ENCODE measurements at regions of chr2 and their contacts with region 1.

Region 1: GRCh38 chr2:149561309-149561926 is 26.2 kb downstream of the MMADHC start:
- DNase-seq: peak; percentile 35
- ATAC-seq: peak; percentile 35; the same call in 2 of the 3 replicates
- H3K4me3 ChIP-seq: no peak overlapping the region
- H3K27ac ChIP-seq: no peak overlapping the region
- H3K4me1 ChIP-seq: peaks cover 9% of the 10 kb centered on the region; the same call in 1 of the 2 replicates
- H3K27me3 ChIP-seq: no peaks in the 10 kb centered on the region
- CTCF ChIP-seq: peak; percentile 72
- EP300 ChIP-seq: no peak
- POLR2A ChIP-seq: no peak
- RAD21 ChIP-seq: peak; percentile 57

Region 2: GRCh38 chr2:148926291-148926961 is 635.0 kb before region 1 on chr2:
- CTCF ChIA-PET with region 1: no interaction called
- POLR2A ChIA-PET with region 1: no interaction called
- in situ Hi-C with region 1: no loop called
- intact Hi-C with region 1: loop called (anchors 1 kb)
- DNase-seq: peak; percentile 48
- ATAC-seq: peak; percentile 94
- H3K4me3 ChIP-seq: no peak overlapping the region
- H3K27ac ChIP-seq: no peak overlapping the region
- H3K4me1 ChIP-seq: no peaks in the 10 kb centered on the region
- H3K27me3 ChIP-seq: no peaks in the 10 kb centered on the region; a peak in 1 of 5 replicates
- CTCF ChIP-seq: peak; percentile 77
- EP300 ChIP-seq: no peak
- POLR2A ChIP-seq: no peak
- RAD21 ChIP-seq: 0 out of 2 replicates have a peak, but pooled peaks have one; percentile 12

Region 3: DNA sequence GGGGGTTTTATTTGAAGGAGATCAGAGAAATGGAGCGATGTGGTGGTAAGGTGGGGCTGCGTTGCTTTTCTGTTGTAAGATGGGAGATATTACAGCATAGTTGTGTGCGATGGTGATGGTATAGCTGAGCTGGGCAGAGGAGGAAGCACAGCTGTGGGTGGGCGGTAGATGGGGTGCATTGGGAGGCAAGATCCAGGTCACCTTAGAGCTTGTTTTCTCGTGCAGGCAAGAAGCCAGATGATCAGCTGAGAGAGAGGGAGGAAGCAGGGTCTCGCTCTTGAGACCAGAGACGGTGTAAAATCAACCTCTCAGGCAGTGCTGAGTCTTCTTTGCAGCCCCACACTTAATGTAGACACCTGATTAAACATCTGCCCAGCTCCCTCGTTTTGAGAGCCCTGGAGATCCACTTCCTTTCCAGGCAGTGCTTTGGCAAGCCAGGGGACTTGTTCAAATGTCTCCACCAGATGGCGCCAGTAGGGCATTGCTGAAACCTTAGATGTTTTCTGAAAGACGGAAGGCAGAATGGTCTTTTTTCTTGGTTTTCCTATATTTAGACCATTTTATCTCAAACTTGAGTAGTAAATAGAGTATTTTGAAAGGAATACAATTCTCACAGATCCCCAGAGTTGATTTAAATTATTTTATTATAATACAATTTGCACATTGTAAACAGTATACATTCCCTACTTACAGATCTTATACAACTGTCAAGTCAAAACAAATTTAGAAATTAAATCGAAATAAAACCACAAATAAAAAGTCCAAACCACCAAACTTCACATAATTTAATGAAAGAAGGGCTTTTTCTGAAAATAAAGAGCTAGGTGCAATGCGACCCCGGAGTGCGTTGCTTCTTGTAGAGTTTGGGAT is 544.1 kb before region 1 on chr2:
- CTCF ChIA-PET with region 1: interaction called, 45 read pairs
- POLR2A ChIA-PET with region 1: no interaction called
- in situ Hi-C with region 1: loop called (anchors 5 kb)
- intact Hi-C with region 1: loop called (anchors 1 kb)
- DNase-seq: peak; percentile 68
- ATAC-seq: peak; percentile 83
- H3K4me3 ChIP-seq: no peak overlapping the region
- H3K27ac ChIP-seq: no peak overlapping the region
- H3K4me1 ChIP-seq: peaks cover 12% of the 10 kb centered on the region
- H3K27me3 ChIP-seq: peaks cover 0 to 6% of the 10 kb centered on the region in 2 experiments; a peak in 1 of 5 replicates
- CTCF ChIP-seq: peak; percentile 89
- EP300 ChIP-seq: no peak
- POLR2A ChIP-seq: no peak
- RAD21 ChIP-seq: peak; percentile 74

Region 4: GRCh38 chr2:149330126-149331022 is 231.0 kb before region 1 on chr2 and contains the start of gene LYPD6:
- CTCF ChIA-PET with region 1: no interaction called
- POLR2A ChIA-PET with region 1: no interaction called
- in situ Hi-C with region 1: no loop called
- intact Hi-C with region 1: loop called (anchors 10 kb)
- DNase-seq: peak; percentile 23
- ATAC-seq: peak; percentile 94
- H3K4me3 ChIP-seq: peak within 1 kb of the TSS; percentile 54 to 71 (median 62)
- H3K27ac ChIP-seq: no peak within 1 kb of the TSS
- H3K4me1 ChIP-seq: peaks cover 15% of the 10 kb centered on the region
- H3K27me3 ChIP-seq: peaks cover 5 to 40% of the 10 kb centered on the region in 2 experiments
- CTCF ChIP-seq: no peak
- EP300 ChIP-seq: no peak
- POLR2A ChIP-seq: no peak
- RAD21 ChIP-seq: no peak
- total RNA-seq, gene LYPD6: 0.06 and 0.07 TPM in 2 replicates

Region 5: GRCh38 chr2:149456285-149456684 is 105.1 kb before region 1 on chr2:
- CTCF ChIA-PET with region 1: interaction called, 3 read pairs
- POLR2A ChIA-PET with region 1: no interaction called
- in situ Hi-C with region 1: no loop called
- intact Hi-C with region 1: loop called (anchors 1 kb)
- DNase-seq: peak; percentile 12
- ATAC-seq: peak; percentile 41; the same call in 1 of the 3 replicates
- H3K4me3 ChIP-seq: no peak overlapping the region
- H3K27ac ChIP-seq: no peak overlapping the region
- H3K4me1 ChIP-seq: no peaks in the 10 kb centered on the region
- H3K27me3 ChIP-seq: no peaks in the 10 kb centered on the region
- CTCF ChIP-seq: 0 out of 2 replicates have a peak, but pooled peaks have one; percentile 17
- EP300 ChIP-seq: no peak
- POLR2A ChIP-seq: no peak
- RAD21 ChIP-seq: no peak

Measured in HepG2 (cell line).